ENCODE measurements at regions of chr6 and their contacts with region 1.

Region 1: DNA sequence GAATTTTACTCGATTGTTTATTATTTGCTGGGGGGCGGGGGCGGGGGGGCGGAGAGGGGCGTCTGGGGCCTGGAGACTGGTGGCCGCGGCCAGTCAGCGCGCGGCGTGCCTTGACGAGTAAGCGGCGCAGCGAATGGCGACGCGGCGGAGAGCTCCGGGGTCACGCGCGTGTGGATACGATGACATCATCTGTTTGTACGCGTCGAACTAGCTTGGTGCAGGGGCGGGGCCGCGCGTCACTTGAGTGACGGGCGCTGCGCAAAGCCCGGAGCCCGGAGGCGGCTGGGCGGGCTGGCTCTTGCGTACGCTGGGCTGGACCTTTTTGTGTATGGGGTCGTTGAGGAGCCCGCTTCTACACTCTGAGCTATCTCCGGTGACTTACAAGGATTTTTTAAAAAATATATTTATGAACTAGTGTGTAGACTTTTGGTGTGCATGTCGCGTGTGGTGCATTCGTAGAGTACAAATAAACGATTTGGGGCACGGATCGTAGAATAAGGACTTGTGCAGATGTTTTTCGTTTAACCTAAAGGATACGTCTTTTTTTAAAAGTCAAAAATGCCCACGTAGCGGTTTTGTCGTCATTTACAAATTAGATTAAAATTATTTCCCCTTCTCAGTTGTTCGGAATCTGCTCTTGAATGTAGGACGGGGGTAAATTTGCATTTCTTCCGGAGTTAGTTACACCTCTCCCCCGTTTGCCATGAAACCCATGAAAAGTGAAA is 2.2 kb upstream of the FOXO3 start:
- DNase-seq: peak; percentile 97 to 99
- ATAC-seq: peak; percentile 59 to 80 (median 66)
- H3K4me3 ChIP-seq: peak overlapping the region; percentile 96
- H3K4me3 Mint-ChIP-seq: peak overlapping the region; percentile 96
- H3K27ac ChIP-seq: peak overlapping the region; percentile 100
- H3K27ac Mint-ChIP-seq: peak overlapping the region; percentile 97 to 98
- H3K4me1 ChIP-seq: peaks cover 21% of the 10 kb centered on the region
- H3K4me1 Mint-ChIP-seq: peaks cover 20 to 27% of the 10 kb centered on the region in 2 donors
- H3K27me3 ChIP-seq: no peaks in the 10 kb centered on the region
- H3K27me3 Mint-ChIP-seq: no peaks in the 10 kb centered on the region
- CTCF ChIP-seq: no peak

Region 2: GRCh38 chr6:108598305-108598863 is 39.9 kb after region 1 on chr6:
- intact Hi-C with region 1: no loop called
- DNase-seq: no peak
- ATAC-seq: peak in 2 of 3 donors; percentile 61
- H3K4me3 ChIP-seq: no peak overlapping the region
- H3K4me3 Mint-ChIP-seq: no peak overlapping the region
- H3K27ac ChIP-seq: no peak overlapping the region
- H3K27ac Mint-ChIP-seq: peak overlapping the region in 1 of 2 donors; percentile 53
- H3K4me1 ChIP-seq: peaks cover 10% of the 10 kb centered on the region
- H3K4me1 Mint-ChIP-seq: peaks cover 58 to 60% of the 10 kb centered on the region in 2 donors
- H3K27me3 ChIP-seq: no peaks in the 10 kb centered on the region
- H3K27me3 Mint-ChIP-seq: no peaks in the 10 kb centered on the region
- CTCF ChIP-seq: no peak

Region 3: GRCh38 chr6:108835218-108835850 is 276.8 kb after region 1 on chr6:
- intact Hi-C with region 1: loop called (anchors 5 kb)
- DNase-seq: peak; percentile 80 to 92
- ATAC-seq: peak; percentile 77 to 92 (median 78)
- H3K4me3 ChIP-seq: no peak overlapping the region
- H3K4me3 Mint-ChIP-seq: peak overlapping the region; percentile 32
- H3K27ac ChIP-seq: no peak overlapping the region
- H3K27ac Mint-ChIP-seq: peak overlapping the region; percentile 2 to 31
- H3K4me1 ChIP-seq: peaks cover 29% of the 10 kb centered on the region
- H3K4me1 Mint-ChIP-seq: peaks cover 41 to 46% of the 10 kb centered on the region in 2 donors
- H3K27me3 ChIP-seq: no peaks in the 10 kb centered on the region
- H3K27me3 Mint-ChIP-seq: no peaks in the 10 kb centered on the region
- CTCF ChIP-seq: peak; percentile 94

Measured in natural killer cell (primary cell).